AG04450 (cell line): ENCODE measurements at regions of chr19 and their contacts with region 1.

Region 1: DNA sequence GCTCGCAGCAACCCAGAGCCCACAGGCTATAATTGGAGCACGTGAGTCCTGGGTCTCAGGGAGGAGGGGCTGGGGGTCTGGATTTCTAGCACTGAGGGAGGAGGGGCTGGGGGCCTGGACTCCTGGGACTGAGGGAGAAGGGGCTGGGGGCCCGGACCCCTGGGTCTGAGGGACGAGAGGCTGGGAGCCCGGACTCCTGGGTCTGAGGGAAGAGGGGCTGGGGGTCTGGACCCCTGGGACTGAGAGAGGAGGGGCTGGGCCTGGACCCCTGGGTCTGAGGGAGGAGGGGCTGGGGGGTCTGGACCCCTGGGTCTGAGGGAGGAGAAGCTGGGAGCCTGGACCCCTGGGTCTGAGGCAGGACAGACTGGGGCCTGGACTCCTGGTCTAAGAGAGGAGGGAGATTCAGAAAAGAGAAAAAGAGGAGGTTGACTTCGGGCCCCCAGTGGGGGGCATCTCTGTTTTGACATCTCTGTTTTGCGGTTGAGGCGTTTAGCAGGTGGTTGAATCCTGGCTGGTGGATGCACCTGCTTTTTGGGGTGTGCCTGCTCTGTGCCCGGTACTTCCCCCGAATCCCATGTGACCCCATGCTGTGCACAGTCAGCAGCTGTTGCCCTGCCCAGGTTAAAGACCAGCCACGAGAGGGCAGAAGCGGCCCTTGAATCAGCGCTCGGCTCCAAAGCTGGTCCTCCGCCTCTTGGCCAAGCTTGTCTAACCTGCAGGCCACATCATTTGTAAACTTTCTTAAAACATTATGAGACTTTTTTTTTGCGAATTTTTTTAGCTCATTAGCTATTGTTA is 10.5 kb downstream of the PVR start:
- DNase-seq: no peak
- H3K4me3 ChIP-seq: no peak overlapping the region
- H3K27ac ChIP-seq: peak overlapping the region; percentile 11
- H3K27me3 ChIP-seq: no peaks in the 10 kb centered on the region
- CTCF ChIP-seq: peak; percentile 56

Region 2: DNA sequence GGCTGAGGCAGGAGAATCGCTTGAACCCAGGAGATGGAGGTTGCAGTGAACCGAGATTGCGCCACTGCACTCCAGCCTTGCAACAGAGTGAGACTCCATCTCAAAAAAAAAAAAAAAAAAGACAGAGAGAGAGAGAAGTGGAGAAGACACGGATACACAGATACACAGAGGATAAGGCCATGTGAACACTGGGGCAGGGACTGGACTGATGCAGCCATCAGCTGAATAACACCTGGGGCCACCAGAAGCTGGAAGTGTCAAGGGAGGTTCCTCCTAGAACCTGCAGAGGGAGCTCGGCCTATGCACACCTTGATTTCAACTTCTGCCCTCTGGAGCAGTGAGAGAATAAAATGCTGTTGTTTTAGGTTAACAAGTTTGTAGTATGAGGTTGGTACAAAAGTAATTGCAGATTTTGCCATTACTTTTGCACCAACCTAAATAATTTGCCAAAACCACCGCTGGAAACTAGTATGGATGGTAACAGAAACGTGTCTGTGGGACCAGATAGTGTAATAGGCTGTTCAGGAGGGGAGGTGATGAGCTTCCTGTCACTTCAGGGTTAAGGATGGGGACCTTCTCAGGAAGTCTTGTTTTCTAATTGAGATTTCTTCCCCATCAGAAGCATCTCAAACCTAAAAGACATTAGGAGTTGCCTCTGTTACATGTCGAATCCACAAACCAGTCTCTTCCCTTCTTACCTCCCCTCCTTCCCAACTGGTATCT is 77.2 kb before region 1 on chr19:
- CTCF ChIA-PET with region 1: interaction called, 95 read pairs
- POLR2A ChIA-PET with region 1: interaction called, 4 read pairs
- DNase-seq: no peak
- H3K4me3 ChIP-seq: no peak overlapping the region
- H3K27ac ChIP-seq: no peak overlapping the region
- H3K27me3 ChIP-seq: no peaks in the 10 kb centered on the region
- CTCF ChIP-seq: peak; percentile 73

Region 3: DNA sequence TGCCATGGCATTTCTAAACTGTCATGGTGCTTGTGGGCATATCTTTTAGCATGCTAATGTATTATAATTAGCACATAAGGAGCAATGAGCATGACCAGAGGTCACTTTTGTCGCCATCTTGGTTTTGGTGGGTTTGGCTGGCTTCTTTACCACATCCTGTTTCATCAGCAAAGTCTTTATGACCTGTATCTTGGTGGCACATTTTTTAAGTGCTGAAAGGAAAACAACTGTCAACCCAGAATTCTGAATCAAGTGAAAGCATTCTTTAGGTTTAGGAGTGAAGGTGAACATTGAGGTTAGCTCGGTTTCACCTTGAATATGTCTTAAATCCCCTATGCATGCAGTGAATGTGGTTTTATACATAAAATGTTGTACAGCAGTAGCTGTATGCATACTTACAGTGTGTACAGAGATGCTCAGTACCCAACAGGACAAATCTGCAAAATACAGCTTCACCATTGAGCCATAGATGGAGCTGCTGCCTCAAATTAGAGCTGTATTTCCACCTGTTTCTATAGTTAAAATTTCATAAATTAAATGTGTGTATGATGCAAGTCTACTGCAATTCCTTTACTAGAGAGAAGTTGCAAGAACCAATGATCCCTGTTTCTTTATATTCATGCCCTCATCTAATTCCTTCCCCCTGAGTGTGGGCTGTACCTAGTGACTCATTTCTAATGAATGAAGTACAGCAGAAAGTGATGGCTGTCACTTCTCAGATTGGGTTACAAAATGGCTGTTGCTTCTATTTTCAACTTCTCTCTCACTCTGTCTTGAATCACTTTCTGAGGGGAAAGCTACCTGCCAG is 66.0 kb before region 1 on chr19:
- CTCF ChIA-PET with region 1: interaction called, 22 read pairs
- POLR2A ChIA-PET with region 1: interaction called, 3 read pairs
- DNase-seq: peak; percentile 86
- H3K4me3 ChIP-seq: no peak overlapping the region
- H3K27ac ChIP-seq: peak overlapping the region; percentile 91
- H3K27me3 ChIP-seq: no peaks in the 10 kb centered on the region
- CTCF ChIP-seq: peak; percentile 60

Region 4: DNA sequence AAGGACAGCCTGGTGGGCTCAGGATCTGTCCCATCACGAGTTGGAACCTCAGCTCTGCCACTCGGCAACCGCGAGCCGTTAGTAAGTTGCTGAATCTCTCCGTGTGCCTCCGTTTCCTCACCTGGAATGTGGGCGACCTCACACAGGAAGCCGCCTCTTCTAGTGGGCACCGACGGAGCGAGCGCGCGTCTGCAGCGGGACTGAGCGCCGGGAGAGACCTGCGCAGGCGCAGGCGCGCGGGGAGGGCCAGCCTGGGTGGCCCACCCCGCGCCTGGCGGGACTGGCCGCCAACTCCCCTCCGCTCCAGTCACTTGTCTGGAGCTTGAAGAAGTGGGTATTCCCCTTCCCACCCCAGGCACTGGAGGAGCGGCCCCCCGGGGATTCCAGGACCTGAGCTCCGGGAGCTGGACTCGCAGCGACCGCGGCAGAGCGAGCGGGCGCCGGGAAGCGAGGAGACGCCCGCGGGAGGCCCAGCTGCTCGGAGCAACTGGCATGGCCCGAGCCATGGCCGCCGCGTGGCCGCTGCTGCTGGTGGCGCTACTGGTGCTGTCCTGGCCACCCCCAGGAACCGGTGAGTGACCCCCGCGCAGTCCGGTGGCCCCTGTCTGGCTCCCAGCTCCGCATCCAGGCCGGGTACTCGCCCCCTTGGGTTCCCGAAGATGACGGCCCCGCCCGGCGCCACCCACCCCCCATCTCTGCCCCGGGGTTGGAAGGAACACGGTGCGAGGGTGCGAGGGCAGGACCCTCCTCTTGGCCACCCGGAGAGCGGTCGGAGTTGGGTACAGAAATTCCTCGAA is 10.4 kb before region 1 on chr19 and contains the start of gene PVR:
- CTCF ChIA-PET with region 1: interaction called, 11 read pairs
- POLR2A ChIA-PET with region 1: interaction called, 4 read pairs
- DNase-seq: no peak
- H3K4me3 ChIP-seq: peak within 1 kb of the TSS; percentile 96
- H3K27ac ChIP-seq: peak within 1 kb of the TSS; percentile 75
- H3K27me3 ChIP-seq: no peaks in the 10 kb centered on the region
- CTCF ChIP-seq: no peak; the same call in 1 of the 2 replicates
- polyA plus RNA-seq, gene PVR: 125 and 151 TPM in 2 replicates